ENCODE measurements at regions of chr14 and their contacts with region 1.

Region 1: DNA sequence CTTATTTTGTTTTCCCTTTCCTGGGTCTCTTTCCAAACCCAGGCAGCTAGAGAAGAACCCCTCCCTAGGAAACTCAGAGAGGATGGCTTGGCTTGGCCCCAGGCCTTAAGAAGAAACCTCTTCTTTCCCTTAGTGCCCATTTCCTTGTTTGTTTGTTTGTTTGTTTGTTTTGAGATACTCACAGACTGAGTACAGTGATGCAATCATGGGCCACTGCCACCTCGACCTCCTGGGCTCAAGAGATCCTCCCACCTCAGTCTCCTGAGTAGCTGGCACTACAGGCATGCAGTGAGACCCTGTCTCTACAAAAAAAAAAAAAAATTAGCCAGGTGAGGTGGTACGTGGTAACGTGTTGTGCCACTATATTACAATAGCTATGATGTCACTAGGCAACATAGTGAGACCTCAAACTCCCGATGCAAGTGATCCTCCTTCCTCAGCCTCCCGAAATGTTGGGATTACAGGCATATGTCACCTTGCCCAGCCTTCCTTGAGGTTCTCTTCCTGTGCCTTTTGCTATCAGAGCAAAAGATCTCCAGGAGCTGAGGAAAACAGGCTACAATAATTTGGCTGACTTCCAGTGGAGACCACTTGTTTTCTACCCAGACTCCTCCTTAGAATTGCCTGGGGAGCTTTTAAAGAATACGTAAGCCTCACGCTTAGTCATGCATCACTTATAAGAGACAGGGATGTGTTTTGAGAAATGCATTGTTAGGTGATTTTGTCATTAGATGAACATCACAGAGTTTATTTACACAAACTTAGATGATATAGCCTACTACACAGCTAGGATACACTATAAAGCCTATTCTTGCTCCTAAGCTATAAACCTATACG is 34.5 kb upstream of the LGALS3 start:
- DNase-seq: peak in 1 of 2 experiments; percentile 70
- H3K4me3 ChIP-seq: no peak overlapping the region
- H3K27ac ChIP-seq: peak overlapping the region; percentile 21
- H3K4me1 ChIP-seq: peaks cover 45% of the 10 kb centered on the region
- H3K27me3 ChIP-seq: no peaks in the 10 kb centered on the region
- CTCF ChIP-seq: no peak

Region 2: GRCh38 chr14:55051426-55052268 is 42.9 kb before region 1 on chr14 and contains the start of gene MAPK1IP1L:
- CTCF ChIA-PET with region 1: interaction called, 10 read pairs
- POLR2A ChIA-PET with region 1: interaction called, 3 read pairs
- intact Hi-C with region 1: no loop called
- DNase-seq: peak; percentile 88 to 97
- H3K4me3 ChIP-seq: peak within 1 kb of the TSS; percentile 80
- H3K27ac ChIP-seq: peak within 1 kb of the TSS; percentile 88
- H3K4me1 ChIP-seq: peaks cover 17% of the 10 kb centered on the region
- H3K27me3 ChIP-seq: no peaks in the 10 kb centered on the region
- CTCF ChIP-seq: peak; percentile 94
- total RNA-seq, gene MAPK1IP1L: 54.3 and 79.7 TPM in 2 replicates

Region 3: DNA sequence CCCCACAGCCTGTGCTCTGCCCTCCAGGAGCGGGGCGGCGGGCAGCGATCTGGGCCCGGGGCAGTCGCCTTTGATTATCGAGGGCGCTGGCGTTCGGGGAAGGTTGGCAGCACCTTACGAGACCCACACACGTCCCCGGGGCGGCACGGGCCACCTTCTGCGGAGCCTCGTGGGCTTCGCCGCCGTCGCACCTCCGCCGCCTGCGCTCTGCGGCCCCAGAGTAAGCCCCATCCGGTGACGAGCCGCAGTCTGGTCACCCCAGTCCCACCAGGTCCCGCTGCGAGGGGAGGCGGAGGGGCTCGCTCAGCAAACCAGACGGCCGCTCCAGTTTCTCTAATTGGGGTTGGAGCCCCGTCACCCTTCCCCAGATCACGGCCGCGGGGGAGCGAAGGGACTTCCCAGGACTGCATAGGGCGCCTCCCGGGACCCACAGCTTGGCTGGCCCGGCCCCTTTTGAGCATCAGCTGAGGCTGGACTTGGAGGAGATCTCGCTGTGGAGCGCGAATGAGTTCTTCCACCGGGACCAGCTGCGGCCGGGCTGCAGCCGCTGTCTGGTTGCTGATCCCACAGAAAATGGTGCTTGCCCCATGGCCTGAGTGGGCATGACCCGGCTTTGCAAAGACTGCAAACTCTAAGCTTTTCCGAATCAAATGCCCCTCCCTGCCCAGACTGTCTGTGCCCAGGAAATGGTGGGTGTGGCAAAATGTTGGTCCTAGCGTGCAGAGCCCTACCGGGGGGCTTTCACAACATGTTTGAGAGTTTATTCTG is 35.1 kb after region 1 on chr14:
- CTCF ChIA-PET with region 1: interaction called, 6 read pairs
- POLR2A ChIA-PET with region 1: interaction called, 7 read pairs
- intact Hi-C with region 1: loop called (anchors 1 kb)
- DNase-seq: peak; percentile 53 to 57
- H3K4me3 ChIP-seq: peak overlapping the region; percentile 77
- H3K27ac ChIP-seq: peak overlapping the region; percentile 72
- H3K4me1 ChIP-seq: peaks cover 58% of the 10 kb centered on the region
- H3K27me3 ChIP-seq: no peaks in the 10 kb centered on the region
- CTCF ChIP-seq: no peak

Region 4: GRCh38 chr14:55160989-55161388 is 66.5 kb after region 1 on chr14:
- CTCF ChIA-PET with region 1: interaction called, 3 read pairs
- POLR2A ChIA-PET with region 1: interaction called, 28 read pairs
- intact Hi-C with region 1: loop called (anchors 1 kb)
- DNase-seq: no peak
- H3K4me3 ChIP-seq: no peak overlapping the region
- H3K27ac ChIP-seq: no peak overlapping the region
- H3K4me1 ChIP-seq: no peaks in the 10 kb centered on the region
- H3K27me3 ChIP-seq: no peaks in the 10 kb centered on the region
- CTCF ChIP-seq: peak; percentile 74

Region 5: DNA sequence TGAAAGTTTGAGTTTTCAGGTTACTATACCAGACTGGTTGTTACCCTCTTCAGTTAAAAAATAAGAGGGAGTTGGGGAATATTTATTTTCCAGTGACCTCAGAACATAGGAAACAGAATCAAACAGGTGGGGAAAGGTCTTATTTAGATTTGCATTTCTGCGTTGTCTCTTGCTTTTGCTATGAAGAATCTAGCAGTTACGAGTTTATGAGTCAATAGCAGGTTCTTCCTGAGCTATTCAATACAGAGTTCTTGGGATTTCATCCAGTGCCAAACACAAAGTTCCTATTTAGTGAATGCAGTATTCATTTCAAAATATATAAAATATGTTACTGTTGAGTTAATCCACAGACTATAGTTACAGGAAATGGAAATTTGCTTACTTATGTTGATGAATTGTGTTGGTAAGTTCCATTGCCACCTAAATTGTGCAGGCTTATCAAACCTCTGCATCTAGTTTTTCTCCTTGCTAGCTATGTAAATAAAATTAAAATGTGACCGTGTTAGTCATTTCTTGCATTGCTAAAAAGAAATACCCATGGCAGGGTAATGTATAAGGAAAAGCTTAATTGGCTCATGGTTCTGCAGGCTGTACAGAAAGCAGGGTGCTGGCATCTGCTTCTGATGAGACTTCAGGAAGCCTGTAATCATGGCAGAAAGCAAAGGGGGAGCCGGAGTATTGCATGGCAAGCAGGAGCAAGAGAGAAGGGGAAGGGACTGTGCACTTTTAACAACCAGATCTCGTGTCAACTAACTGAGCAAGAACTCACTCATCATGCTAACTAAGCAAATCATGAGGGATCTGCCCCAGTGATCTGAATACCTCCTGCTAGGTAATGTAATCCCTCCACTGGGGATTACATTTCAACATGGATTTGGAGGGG is 595.7 kb after region 1 on chr14:
- CTCF ChIA-PET with region 1: interaction called, 13 read pairs
- POLR2A ChIA-PET with region 1: no interaction called
- intact Hi-C with region 1: no loop called
- DNase-seq: peak in 1 of 2 experiments; percentile 46
- H3K4me3 ChIP-seq: no peak overlapping the region
- H3K27ac ChIP-seq: no peak overlapping the region
- H3K4me1 ChIP-seq: 0 out of 2 replicates have a peak, but pooled peaks cover 12% of the 10 kb centered on the region
- H3K27me3 ChIP-seq: no peaks in the 10 kb centered on the region
- CTCF ChIP-seq: no peak

Measured in PC-9 (cell line).